ENCODE measurements at regions of chrX and their contacts with region 1.

Region 1: GRCh38 chrX:12352922-12353321 is 214.6 kb downstream of the FRMPD4 start:
- DNase-seq: no peak
- H3K4me3 ChIP-seq: no peak overlapping the region
- H3K27ac ChIP-seq: no peak overlapping the region
- H3K4me1 ChIP-seq: no peaks in the 10 kb centered on the region
- H3K27me3 ChIP-seq: peaks cover 12% of the 10 kb centered on the region
- CTCF ChIP-seq: no peak

Region 2: DNA sequence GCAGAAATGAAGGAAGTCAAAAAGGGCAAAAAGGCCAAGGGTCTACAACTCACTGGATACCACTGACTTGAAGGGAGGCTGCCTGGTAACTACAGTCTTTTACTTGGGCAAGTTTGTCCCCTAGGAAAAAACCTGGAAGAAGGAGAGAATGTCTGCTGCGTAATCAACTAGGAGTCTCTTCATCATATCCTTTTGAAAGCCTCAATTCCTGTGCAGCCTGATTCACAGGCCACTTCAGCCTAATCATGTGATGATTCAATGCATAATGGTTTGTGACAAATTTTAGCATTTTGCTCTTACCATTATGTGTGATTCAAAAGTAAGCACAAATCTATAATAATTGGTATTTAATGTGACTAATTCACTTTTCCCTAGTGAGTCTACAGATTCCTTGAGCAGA is 58.9 kb after region 1 on chrX:
- CTCF ChIA-PET with region 1: no interaction called
- POLR2A ChIA-PET with region 1: no interaction called
- intact Hi-C with region 1: loop called (anchors 10 kb)
- DNase-seq: no peak
- H3K4me3 ChIP-seq: no peak overlapping the region
- H3K27ac ChIP-seq: no peak overlapping the region
- H3K4me1 ChIP-seq: no peaks in the 10 kb centered on the region
- H3K27me3 ChIP-seq: peaks cover 24% of the 10 kb centered on the region
- CTCF ChIP-seq: no peak

Region 3: DNA sequence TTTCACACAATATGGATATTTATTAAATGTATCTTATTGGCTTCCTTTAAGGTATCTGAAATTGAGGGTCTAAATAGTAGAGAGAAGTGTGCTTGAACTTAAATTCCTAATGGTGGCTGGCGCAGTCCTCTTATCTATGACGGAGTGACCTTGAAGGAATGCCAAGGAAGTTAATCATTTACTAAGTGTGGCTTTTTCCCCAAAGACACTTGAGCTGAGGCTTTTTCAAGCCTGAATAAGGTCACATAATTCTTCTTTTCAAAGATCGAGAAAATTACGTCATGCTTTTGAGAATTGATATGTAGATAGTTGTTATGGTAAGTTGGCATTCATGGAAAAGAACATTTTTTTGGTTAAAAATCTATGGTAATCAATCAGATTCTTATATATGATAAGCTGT is 426.6 kb after region 1 on chrX:
- CTCF ChIA-PET with region 1: no interaction called
- POLR2A ChIA-PET with region 1: no interaction called
- intact Hi-C with region 1: no loop called
- DNase-seq: no peak
- H3K4me3 ChIP-seq: no peak overlapping the region
- H3K27ac ChIP-seq: no peak overlapping the region
- H3K4me1 ChIP-seq: no peaks in the 10 kb centered on the region
- H3K27me3 ChIP-seq: peaks cover 11% of the 10 kb centered on the region
- CTCF ChIP-seq: no peak